ENCODE measurements at regions of chr15 and their contacts with region 1.

Region 1: DNA sequence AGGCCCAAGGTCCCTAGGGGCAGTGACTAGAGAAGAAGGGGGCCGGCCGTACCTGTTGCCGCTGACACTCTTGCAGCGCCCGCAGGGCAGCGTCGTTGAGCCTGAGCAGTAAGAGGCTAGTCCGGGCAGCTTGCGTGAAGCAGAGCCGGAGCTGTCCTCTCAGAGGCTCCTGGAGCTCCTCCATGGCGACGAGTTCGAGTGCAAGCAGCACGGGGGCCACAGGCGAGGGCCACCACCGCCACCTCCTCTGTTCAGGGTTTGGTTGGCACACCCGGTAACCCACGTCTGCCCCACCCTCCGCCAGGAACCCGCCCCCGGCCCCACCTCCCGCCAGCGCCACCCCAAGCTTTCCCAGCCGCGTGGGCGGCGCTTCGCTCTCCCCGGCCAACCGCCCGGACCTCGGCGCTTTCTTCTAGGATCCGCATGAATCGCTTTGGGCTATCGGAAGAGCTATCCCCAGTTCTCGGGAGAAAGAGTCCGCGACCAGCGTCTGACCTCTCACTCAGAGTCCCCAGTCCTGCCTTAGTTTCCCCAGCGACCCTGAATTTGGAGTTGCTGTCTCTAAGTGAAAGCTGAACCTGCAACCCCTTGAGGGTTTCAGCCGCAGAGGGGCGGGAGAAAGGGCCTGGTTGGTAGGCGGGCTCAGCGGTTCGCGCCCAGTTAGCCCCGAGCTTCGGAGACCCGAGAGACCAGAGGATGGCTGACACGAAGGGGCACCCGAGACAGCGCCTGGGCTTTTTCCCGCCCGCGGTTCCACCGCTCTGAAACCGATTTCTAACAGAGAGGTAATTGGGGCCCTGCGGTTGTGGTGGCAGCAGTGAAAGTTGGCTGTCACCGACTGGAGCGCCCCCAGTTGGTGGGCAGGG is at the start of gene ELL3:
- DNase-seq: peak; percentile 94
- ATAC-seq: peak; percentile 84
- H3K4me3 Mint-ChIP-seq: peak within 1 kb of the TSS; percentile 78
- H3K27ac Mint-ChIP-seq: peak within 1 kb of the TSS; percentile 92
- H3K4me1 Mint-ChIP-seq: peaks cover 19% of the 10 kb centered on the region
- H3K27me3 Mint-ChIP-seq: no peaks in the 10 kb centered on the region
- total RNA-seq, gene ELL3: 3.6 TPM

Region 2: GRCh38 chr15:43791993-43792760 is 15.2 kb after region 1 on chr15 and contains the start of gene SERF2:
- CTCF ChIA-PET with region 1: interaction called, 11 read pairs
- POLR2A ChIA-PET with region 1: interaction called, 8 read pairs
- intact Hi-C with region 1: loop called (anchors 1 kb)
- DNase-seq: peak; percentile 100
- ATAC-seq: peak; percentile 98
- H3K4me3 Mint-ChIP-seq: peak within 1 kb of the TSS; percentile 97
- H3K27ac Mint-ChIP-seq: peak within 1 kb of the TSS; percentile 97
- H3K4me1 Mint-ChIP-seq: peaks cover 35% of the 10 kb centered on the region
- H3K27me3 Mint-ChIP-seq: no peaks in the 10 kb centered on the region
- total RNA-seq, gene SERF2: 710 to 718 TPM

Region 3: GRCh38 chr15:44038755-44039191 is 261.8 kb after region 1 on chr15:
- CTCF ChIA-PET with region 1: no interaction called
- POLR2A ChIA-PET with region 1: no interaction called
- intact Hi-C with region 1: no loop called
- DNase-seq: no peak
- ATAC-seq: no peak
- H3K4me3 Mint-ChIP-seq: no peak overlapping the region
- H3K27ac Mint-ChIP-seq: no peak overlapping the region
- H3K4me1 Mint-ChIP-seq: no peaks in the 10 kb centered on the region
- H3K27me3 Mint-ChIP-seq: peaks cover 38% of the 10 kb centered on the region

Region 4: DNA sequence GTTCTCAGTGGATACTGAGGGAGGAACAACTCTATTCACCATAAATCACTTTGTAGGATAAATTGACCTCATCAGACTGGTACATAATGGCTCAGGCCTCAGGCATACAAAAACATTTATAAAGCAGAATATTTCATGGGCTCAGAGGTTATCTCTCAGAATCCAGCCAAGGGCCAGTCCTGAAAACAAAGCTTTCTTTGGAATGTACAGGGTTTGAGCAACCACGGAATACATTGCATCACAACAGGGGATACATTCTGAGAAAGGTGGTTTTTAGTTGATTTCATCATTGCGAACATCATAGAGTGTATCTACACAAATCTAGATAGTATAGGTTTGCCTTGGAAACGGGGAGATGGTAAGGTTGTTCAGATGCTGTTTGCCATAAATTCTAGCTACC is 617.1 kb after region 1 on chr15:
- CTCF ChIA-PET with region 1: no interaction called
- POLR2A ChIA-PET with region 1: no interaction called
- intact Hi-C with region 1: no loop called
- DNase-seq: no peak
- ATAC-seq: no peak
- H3K4me3 Mint-ChIP-seq: no peak overlapping the region
- H3K27ac Mint-ChIP-seq: no peak overlapping the region
- H3K4me1 Mint-ChIP-seq: peaks cover 6% of the 10 kb centered on the region
- H3K27me3 Mint-ChIP-seq: no peaks in the 10 kb centered on the region

Measured in activated CD4-positive, alpha-beta T cell treated with anti-CD3 and anti-CD28 coated beads for 36 hours (primary cell).